ENCODE measurements at regions of chr7 and their contacts with region 1.

Region 1: DNA sequence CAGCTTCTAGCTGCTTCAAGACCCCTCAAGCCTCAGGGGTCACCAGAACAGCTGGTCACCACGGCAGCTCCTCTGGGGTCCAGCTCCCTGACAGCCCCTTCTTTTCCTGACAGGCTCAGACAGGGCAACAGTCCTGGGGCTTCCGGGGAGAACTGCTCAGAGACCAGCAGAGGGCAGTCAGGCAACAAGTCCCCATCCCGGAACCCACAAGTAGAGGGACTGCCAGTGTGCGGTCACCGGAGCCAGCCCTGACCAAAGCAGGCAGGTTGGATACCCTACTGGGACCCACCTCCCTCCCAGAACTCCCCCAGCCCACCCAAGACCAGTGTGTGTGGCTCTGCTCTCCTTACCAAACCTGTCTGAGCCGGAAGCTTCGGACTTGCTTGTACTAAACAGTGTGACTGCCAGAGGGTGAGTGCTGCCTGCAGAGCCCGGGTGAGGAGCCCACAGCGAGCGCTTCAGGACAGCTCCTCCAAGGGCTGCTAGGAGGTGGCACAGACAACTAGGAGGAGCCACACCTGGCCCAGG is 40.3 kb downstream of the YKT6 start:
- DNase-seq: peak; percentile 81
- H3K4me3 ChIP-seq: no peak overlapping the region
- H3K27ac ChIP-seq: no peak overlapping the region
- H3K4me1 ChIP-seq: no peaks in the 10 kb centered on the region
- H3K27me3 ChIP-seq: no peaks in the 10 kb centered on the region
- CTCF ChIP-seq: peak; percentile 25 to 55 (median 54)
- POLR2A ChIP-seq: no peak

Region 2: GRCh38 chr7:44477063-44477830 is 236.2 kb after region 1 on chr7:
- intact Hi-C with region 1: loop called (anchors 10 kb)
- DNase-seq: peak; percentile 60
- H3K4me3 ChIP-seq: no peak overlapping the region
- H3K27ac ChIP-seq: no peak overlapping the region
- H3K4me1 ChIP-seq: no peaks in the 10 kb centered on the region
- H3K27me3 ChIP-seq: no peaks in the 10 kb centered on the region
- CTCF ChIP-seq: peak; percentile 74 to 86 (median 82)
- POLR2A ChIP-seq: no peak

Measured in testis (tissue), 5 donors.